ENCODE measurements at regions of chr5 and their contacts with region 1.

Region 1: DNA sequence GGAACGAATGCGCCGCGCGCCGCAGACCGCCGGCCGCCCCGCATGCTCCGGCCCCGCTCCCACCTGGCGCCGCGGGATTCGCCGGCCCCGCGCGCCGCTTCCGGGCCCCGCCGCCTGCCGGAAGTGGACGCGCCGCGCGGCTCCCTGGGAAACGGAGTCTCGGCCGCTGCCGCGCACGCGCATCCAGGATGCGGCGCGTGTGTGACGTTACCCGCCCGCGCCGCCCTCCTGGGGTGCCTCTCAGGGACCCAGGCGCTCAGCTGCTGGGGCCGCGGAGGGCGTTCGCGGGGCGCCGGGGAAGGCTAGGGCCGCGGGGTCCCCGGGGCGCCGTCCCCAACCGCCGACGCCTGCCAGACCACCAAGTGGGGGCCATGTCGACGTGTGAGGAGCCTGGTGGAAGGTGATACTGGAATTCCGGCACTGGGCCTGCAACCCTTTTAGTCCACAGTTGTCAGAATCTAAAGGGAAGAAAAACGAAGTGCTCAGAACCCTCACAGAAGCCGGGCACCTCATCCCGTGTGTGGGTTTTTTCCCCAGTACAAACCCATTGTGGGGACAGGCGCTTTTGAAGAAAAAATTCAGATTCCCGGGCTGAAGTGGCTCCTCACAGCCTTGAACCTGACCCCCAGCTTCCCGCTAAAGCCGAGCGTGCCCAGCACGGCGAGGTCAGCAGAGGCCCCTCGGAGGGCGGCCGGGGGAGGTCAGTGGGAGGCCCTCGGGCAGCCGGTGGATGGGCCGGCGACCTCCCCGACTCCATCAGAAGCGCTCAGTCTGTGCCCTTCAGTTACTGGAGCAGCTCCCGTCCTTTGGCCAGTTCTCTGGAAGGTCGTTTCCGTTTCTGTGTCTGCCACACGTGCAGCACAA is at the start of gene CLPTM1L:
- DNase-seq: peak; percentile 90
- H3K4me3 Mint-ChIP-seq: peak within 1 kb of the TSS; percentile 93
- H3K27ac Mint-ChIP-seq: peak within 1 kb of the TSS; percentile 83
- H3K4me1 Mint-ChIP-seq: peaks cover 35% of the 10 kb centered on the region
- H3K27me3 Mint-ChIP-seq: no peaks in the 10 kb centered on the region
- total RNA-seq, gene CLPTM1L: 99.7 to 101 TPM

Region 2: DNA sequence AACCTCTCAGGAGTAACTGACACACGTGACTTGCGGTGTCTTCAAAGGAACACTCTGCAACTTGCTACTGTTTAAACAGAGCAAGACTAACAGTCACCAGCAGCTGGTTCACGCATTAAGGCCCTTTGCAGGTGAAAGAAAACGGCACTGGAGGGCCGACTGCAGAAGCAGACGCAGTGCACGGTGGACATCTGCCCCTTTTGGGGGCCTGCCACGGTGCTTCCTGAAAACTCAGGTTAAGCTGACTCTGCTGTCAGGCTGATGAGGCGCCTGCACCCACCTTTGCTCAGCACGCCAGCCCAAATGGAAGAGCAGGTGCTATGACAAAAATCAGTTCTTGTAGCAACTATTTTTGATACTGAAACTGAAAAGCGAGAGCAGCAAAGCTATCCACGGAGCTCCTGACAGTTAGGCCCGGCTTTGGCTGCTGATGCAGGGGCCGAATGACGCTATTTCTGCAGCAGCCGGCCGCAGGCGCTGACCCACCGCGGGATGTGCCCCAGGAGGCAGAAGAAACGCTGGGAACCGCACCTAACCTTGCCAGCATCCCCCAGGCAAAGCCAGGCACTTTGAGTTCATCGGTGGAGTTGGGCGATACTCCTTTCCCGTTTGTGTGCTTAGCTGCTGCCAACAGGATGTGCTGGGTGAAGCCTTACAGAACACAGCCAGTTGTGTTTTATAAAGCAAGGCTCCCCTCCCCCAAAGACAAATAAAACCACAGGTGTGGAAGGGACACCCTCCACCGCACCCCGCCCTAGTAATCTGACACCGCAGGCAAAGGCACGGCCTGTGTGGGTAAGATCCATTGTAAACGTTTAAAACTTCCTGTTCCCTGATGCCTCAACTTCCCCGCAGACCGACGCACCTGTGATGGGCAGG is 29.3 kb before region 1 on chr5:
- CTCF ChIA-PET with region 1: interaction called, 3 read pairs
- POLR2A ChIA-PET with region 1: interaction called, 21 read pairs
- DNase-seq: peak; percentile 80
- H3K4me3 Mint-ChIP-seq: peak overlapping the region; percentile 60
- H3K27ac Mint-ChIP-seq: peak overlapping the region; percentile 94
- H3K4me1 Mint-ChIP-seq: peaks cover 65% of the 10 kb centered on the region
- H3K27me3 Mint-ChIP-seq: peaks cover 5% of the 10 kb centered on the region

Region 3: GRCh38 chr5:1385395-1386273 is 40.4 kb after region 1 on chr5:
- CTCF ChIA-PET with region 1: interaction called, 4 read pairs
- POLR2A ChIA-PET with region 1: interaction called, 19 read pairs
- DNase-seq: peak; percentile 89
- H3K4me3 Mint-ChIP-seq: peak overlapping the region; percentile 100
- H3K27ac Mint-ChIP-seq: peak overlapping the region; percentile 99
- H3K4me1 Mint-ChIP-seq: peaks cover 29% of the 10 kb centered on the region
- H3K27me3 Mint-ChIP-seq: peaks cover 7% of the 10 kb centered on the region